ENCODE measurements at regions of chr13 and their contacts with region 1.

Region 1: GRCh38 chr13:36999054-36999714 is at the start of gene ALG5:
- DNase-seq: peak; percentile 94
- H3K4me3 ChIP-seq: peak within 1 kb of the TSS; percentile 76 to 94 (median 82)
- H3K27ac ChIP-seq: peak within 1 kb of the TSS; percentile 96 to 99 (median 98)
- H3K4me1 ChIP-seq: peaks cover 0 to 27% (median 20%) of the 10 kb centered on the region in 4 donors
- H3K27me3 ChIP-seq: no peaks in the 10 kb centered on the region
- CTCF ChIP-seq: peak in 3 of 4 experiments; percentile 43 to 98 (median 51)
- EP300 ChIP-seq: no peak
- POLR2A ChIP-seq: peak in 1 of 2 donors; percentile 35
- total RNA-seq, gene ALG5: 21.9 to 36.0 (median 29.6) TPM

Region 2: GRCh38 chr13:36242761-36243160 is 756.4 kb before region 1 on chr13:
- intact Hi-C with region 1: no loop called
- DNase-seq: no peak
- H3K4me3 ChIP-seq: no peak overlapping the region
- H3K27ac ChIP-seq: no peak overlapping the region
- H3K4me1 ChIP-seq: no peaks in the 10 kb centered on the region
- H3K27me3 ChIP-seq: no peaks in the 10 kb centered on the region
- CTCF ChIP-seq: no peak
- EP300 ChIP-seq: no peak
- POLR2A ChIP-seq: no peak

Region 3: GRCh38 chr13:36858290-36858689 is 140.9 kb before region 1 on chr13:
- intact Hi-C with region 1: loop called (anchors 5 kb)
- DNase-seq: no peak
- H3K4me3 ChIP-seq: no peak overlapping the region
- H3K27ac ChIP-seq: no peak overlapping the region
- H3K4me1 ChIP-seq: peaks cover 0 to 8% (median 0%) of the 10 kb centered on the region in 4 donors
- H3K27me3 ChIP-seq: no peaks in the 10 kb centered on the region
- CTCF ChIP-seq: peak; percentile 13 to 51 (median 35)
- EP300 ChIP-seq: no peak
- POLR2A ChIP-seq: no peak

Region 4: GRCh38 chr13:36919833-36920615 is 79.2 kb before region 1 on chr13 and contains the start of gene SMAD9:
- intact Hi-C with region 1: loop called (anchors 5 kb)
- DNase-seq: peak; percentile 91
- H3K4me3 ChIP-seq: peak within 1 kb of the TSS; percentile 51 to 73 (median 68)
- H3K27ac ChIP-seq: peak within 1 kb of the TSS; percentile 81 to 89 (median 89)
- H3K4me1 ChIP-seq: peaks cover 0 to 47% (median 34%) of the 10 kb centered on the region in 4 donors
- H3K27me3 ChIP-seq: no peaks in the 10 kb centered on the region
- CTCF ChIP-seq: no peak
- EP300 ChIP-seq: no peak
- POLR2A ChIP-seq: no peak
- total RNA-seq, gene SMAD9: 21.7 to 33.3 (median 27.8) TPM

Region 5: DNA sequence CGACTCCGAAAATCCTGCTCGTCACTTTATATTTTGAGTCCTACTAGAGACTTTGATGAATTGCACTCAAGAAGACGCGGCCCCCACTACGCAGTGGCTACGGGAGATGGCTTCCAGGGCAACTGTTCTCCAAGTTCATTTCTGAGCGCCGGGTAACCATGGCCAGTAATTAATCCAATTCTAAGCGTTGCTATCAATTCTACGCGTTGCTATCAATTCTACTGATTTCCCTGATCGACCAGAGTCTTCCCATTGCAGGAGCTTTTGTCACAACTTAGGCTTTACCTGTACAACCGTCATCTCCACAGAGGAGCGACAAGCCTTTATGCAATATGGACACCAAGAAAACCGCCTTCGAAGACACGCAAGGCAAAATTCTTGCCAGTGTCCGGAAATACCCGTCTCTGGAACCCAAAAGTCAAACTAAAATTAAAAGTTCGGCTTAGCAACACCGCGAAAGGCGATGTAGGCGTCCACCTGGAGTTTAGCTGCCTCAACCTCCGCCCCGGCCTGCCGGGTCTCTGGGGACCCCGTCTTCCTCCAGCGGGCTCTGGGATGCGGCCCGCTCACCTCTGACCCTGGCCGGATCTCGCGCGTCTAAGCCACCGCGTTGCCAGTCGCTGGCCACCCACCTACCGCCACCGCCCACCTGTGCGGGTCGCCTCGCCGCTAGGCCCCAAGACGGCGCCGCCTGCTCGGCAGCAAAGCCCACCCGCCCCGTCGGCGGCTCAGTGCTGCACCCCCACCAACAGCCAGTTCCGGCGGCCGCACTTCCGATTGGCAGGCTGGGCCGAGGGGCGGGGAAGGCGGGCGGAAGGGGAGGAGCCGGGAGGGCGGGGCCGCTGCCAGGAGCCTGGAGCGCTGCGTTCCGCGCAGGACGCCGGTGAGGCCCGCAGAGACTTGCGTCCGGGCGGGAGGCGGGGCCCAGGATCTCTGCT is 60.0 kb after region 1 on chr13 and contains the start of gene SUPT20H:
- intact Hi-C with region 1: loop called (anchors 5 kb)
- DNase-seq: peak; percentile 96
- H3K4me3 ChIP-seq: peak within 1 kb of the TSS; percentile 67 to 97 (median 82)
- H3K27ac ChIP-seq: peak within 1 kb of the TSS; percentile 82 to 96 (median 90)
- H3K4me1 ChIP-seq: peaks cover 0 to 20% (median 13%) of the 10 kb centered on the region in 4 donors
- H3K27me3 ChIP-seq: no peaks in the 10 kb centered on the region
- CTCF ChIP-seq: no peak
- EP300 ChIP-seq: no peak
- POLR2A ChIP-seq: peak; percentile 69 to 81
- total RNA-seq, gene SUPT20H: 41.8 to 55.8 (median 43.9) TPM

Region 6: DNA sequence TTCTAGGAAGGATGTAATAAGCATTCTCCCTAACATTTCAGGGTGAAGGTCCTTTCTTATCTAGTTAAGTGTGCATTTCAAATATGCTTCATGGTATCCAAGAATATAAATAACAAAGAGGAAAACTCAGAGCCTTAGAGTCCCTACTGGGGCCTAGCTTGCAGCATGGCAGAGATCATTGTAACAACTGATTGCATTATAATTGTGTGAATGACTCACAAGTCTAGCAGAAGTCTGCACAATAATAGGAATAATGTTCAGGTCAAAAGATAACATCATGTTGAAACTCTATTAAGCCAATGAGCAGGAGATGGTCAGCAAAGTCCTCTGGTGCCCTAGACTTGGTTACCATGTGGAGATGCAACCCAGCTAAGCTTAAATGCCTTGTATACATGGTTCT is 596.0 kb after region 1 on chr13:
- intact Hi-C with region 1: loop called (anchors 5 kb)
- DNase-seq: no peak
- H3K4me3 ChIP-seq: no peak overlapping the region
- H3K27ac ChIP-seq: no peak overlapping the region
- H3K4me1 ChIP-seq: peaks cover 0 to 23% (median 10%) of the 10 kb centered on the region in 4 donors
- H3K27me3 ChIP-seq: no peaks in the 10 kb centered on the region
- CTCF ChIP-seq: no peak
- EP300 ChIP-seq: no peak
- POLR2A ChIP-seq: no peak

Region 7: DNA sequence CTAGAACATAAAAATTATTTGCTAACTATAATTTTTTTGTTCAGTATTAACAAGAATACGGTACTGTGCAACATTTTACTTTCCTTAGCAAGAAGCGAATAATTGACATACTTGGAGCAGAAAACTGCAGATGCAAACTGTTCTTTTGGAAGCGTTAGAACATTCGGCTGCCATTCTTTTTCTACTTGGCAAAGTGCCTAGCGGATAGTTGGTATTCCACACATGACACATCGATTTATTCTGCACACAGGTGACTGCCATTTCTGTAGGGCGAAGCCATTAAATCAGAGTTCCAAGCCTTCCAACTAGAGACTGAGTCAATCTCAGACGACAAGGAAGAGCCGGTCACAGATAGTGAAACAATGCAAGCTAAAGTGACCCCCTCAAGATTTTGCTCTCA is 753.0 kb after region 1 on chr13:
- intact Hi-C with region 1: no loop called
- DNase-seq: no peak
- H3K4me3 ChIP-seq: no peak overlapping the region
- H3K27ac ChIP-seq: no peak overlapping the region
- H3K4me1 ChIP-seq: peaks cover 0 to 4% (median 0%) of the 10 kb centered on the region in 4 donors
- H3K27me3 ChIP-seq: no peaks in the 10 kb centered on the region
- CTCF ChIP-seq: no peak
- EP300 ChIP-seq: no peak
- POLR2A ChIP-seq: no peak

Measured in sigmoid colon (tissue), 7 donors.